K562 (cell line): ENCODE measurements at regions of chr7 and their contacts with region 1.

Region 1: GRCh38 chr7:22697876-22698606 is 29.0 kb upstream of the IL6 start:
- DNase-seq: no peak
- ATAC-seq: no peak
- H3K4me3 ChIP-seq: no peak overlapping the region
- H3K27ac ChIP-seq: peak overlapping the region; percentile 21; the same call in 1 of the 3 replicates
- H3K4me1 ChIP-seq: peaks cover 19 to 68% of the 10 kb centered on the region in 2 experiments
- H3K27me3 ChIP-seq: no peaks in the 10 kb centered on the region
- CTCF ChIP-seq: no peak
- EP300 ChIP-seq: no peak
- POLR2A ChIP-seq: no peak
- RAD21 ChIP-seq: no peak

Region 2: DNA sequence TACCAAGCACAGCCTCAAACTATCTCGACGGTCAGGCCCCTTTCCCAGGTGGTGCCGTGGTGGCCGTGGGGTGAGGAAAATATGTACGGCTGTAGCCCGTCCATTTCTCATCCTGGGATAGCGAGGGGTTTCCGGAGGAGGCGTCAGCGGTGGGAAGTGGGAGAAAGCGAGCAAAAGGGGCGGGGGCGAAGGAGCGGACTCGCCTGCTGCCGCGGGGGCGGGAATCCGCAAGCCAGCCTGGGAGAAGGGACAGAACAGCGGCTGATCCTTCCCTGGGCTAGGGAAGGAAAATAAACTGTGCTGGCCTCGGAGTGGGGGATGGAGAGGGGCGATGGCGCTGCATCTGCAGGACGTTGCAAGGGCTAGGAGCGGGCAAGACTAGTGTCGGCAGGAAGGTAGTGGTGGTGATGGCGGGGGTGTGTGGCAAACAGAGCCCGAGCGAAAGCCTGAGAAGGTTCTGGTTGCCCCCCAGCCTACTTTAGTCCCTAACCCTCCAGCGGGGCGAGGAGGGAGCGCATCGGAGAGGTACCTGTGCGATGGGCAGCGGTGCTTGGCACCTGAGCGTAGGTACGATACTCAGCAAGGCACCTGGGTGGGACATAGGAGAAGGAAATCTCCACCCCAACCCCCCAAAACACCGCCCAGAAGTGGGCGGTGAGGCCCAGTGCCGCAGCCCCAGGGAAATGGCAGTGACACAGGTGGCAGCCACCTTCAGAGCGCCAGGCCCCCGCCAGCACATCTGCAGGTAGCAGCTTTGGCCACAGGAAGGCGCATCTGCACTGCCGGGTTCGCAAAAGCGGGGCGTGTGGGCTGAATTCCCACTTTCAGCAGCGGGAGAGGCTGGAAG is 148.2 kb before region 1 on chr7:
- CTCF ChIA-PET with region 1: no interaction called
- POLR2A ChIA-PET with region 1: no interaction called
- in situ Hi-C with region 1: no loop called
- intact Hi-C with region 1: no loop called
- DNase-seq: no peak
- ATAC-seq: 0 out of 3 replicates have a peak, but pooled peaks have one; percentile 46
- H3K4me3 ChIP-seq: no peak overlapping the region
- H3K27ac ChIP-seq: no peak overlapping the region
- H3K4me1 ChIP-seq: peaks cover 0 to 8% of the 10 kb centered on the region in 2 experiments; a peak in 1 of 5 replicates
- H3K27me3 ChIP-seq: no peaks in the 10 kb centered on the region
- CTCF ChIP-seq: peak; percentile 19 to 35 (median 24); a peak in 3 of 6 replicates
- EP300 ChIP-seq: no peak
- POLR2A ChIP-seq: no peak
- RAD21 ChIP-seq: no peak

Region 3: DNA sequence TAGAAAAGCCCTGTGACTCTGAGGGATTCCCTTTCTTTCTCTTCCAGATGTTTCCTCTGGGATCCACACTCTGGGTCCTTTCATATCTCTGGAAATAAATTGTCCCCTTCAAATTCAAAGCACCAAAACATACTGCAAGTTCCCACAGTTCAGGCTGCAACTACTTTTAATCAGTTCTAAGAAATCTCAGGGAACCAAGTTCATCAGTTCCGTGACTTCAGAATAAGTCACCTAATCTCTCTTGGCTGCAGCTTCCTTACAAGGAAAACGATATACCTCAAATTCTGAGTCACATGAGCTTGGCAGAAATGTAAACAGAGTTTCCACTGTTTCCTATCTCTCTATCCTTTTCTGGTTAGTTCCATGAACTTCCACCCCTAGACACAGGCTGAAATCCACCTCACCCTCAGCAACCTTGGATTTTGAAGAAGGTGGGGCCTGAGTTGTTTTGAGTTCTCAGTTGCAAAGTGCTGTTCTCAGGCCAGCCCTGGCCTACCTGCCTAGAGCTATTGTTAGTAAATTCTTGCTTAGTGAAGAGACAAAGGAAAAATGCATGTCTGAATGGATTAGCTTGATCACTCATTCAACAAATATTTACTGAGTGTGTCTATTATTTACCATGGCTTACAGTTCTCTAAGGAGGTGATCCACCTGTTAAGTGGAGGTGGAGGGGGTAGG is 30.3 kb before region 1 on chr7:
- CTCF ChIA-PET with region 1: no interaction called
- POLR2A ChIA-PET with region 1: interaction called, 5 read pairs
- in situ Hi-C with region 1: no loop called
- intact Hi-C with region 1: loop called (anchors 5 kb)
- DNase-seq: peak in 2 of 4 experiments; percentile 54 to 79
- ATAC-seq: peak; percentile 58
- H3K4me3 ChIP-seq: no peak overlapping the region
- H3K27ac ChIP-seq: peak overlapping the region; percentile 55
- H3K4me1 ChIP-seq: peaks cover 20 to 79% of the 10 kb centered on the region in 2 experiments
- H3K27me3 ChIP-seq: no peaks in the 10 kb centered on the region
- CTCF ChIP-seq: no peak
- EP300 ChIP-seq: peak; percentile 93
- POLR2A ChIP-seq: no peak
- RAD21 ChIP-seq: peak; percentile 4 to 33; a peak in 1 of 4 replicates

Region 4: DNA sequence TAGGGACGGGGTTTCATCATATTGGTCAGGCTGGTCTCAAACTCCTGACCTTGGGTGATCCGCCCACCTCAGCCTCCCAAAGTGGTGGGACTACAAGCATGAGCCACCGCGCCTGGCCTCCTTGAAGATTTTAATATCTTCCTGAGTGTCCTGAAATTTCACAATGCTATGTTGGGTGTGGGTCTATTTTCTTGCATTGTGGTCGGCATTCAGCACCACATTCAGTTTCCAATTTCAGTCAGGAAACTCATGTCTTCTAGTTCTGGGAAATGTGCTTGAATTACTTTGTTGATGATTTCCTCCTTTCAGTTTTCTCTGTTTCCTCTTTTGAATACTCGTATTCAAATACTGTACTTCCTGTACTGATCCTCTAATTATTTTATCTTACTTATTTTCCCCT is 20.4 kb before region 1 on chr7:
- CTCF ChIA-PET with region 1: interaction called, 3 read pairs
- POLR2A ChIA-PET with region 1: interaction called, 22 read pairs
- in situ Hi-C with region 1: no loop called
- intact Hi-C with region 1: loop called (anchors 1 kb)
- DNase-seq: no peak
- ATAC-seq: no peak
- H3K4me3 ChIP-seq: no peak overlapping the region
- H3K27ac ChIP-seq: peak overlapping the region; percentile 48
- H3K4me1 ChIP-seq: peaks cover 12 to 84% of the 10 kb centered on the region in 2 experiments
- H3K27me3 ChIP-seq: no peaks in the 10 kb centered on the region
- CTCF ChIP-seq: no peak
- EP300 ChIP-seq: no peak
- POLR2A ChIP-seq: no peak
- RAD21 ChIP-seq: no peak

Region 5: DNA sequence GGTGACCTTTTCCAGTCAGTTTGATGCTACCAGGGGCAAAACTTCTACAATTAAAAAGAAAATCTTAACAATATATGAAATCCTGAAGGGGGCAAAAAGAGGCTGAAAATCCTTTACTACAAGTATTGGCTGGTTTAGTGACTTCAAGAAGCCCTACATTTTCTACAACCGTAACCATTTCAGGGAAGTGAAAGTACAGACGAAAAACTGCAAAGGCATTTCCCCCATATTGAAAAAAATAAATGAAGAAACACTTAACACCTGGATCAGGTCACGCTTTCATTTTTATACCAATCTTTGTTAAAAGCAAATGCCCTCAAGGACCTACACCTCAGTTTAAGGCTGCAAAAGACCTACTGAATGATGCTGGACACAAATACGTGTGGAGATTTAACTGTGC is 67.6 kb after region 1 on chr7:
- CTCF ChIA-PET with region 1: no interaction called
- POLR2A ChIA-PET with region 1: no interaction called
- in situ Hi-C with region 1: no loop called
- intact Hi-C with region 1: no loop called
- DNase-seq: no peak
- ATAC-seq: no peak
- H3K4me3 ChIP-seq: no peak overlapping the region
- H3K27ac ChIP-seq: no peak overlapping the region
- H3K4me1 ChIP-seq: no peaks in the 10 kb centered on the region
- H3K27me3 ChIP-seq: no peaks in the 10 kb centered on the region
- CTCF ChIP-seq: no peak
- EP300 ChIP-seq: no peak
- POLR2A ChIP-seq: no peak
- RAD21 ChIP-seq: no peak

Region 6: DNA sequence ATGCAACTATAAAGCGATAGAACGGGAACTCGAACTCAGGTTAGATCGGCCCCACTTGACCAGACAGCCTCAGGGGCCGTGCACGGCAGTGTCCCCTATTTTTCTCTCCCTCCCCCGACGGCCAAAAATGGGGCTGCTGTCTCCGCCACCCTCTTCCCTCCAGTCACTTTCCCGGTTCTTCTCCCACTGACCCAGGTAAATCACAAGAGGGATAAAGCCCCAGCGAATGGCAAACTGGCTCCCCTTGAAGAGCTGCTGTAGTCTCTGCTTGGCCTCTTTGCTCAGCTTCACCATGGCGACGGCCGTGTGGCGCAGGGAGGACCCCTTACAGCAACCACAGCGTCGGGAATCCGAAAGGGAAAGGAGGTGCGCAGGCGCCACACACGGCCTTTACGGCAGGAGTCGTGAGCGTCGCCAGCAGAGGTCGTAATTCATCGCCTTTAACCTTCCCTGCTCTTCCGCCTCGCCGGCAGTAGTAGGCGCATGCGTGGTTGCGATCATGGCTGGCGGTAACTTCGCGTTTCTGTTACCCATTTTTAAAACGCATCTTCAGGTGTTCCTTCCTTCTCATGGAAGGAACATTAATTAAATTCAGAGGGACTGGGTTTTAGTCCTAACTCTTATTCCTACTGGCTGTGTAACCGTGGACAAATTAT is 124.6 kb after region 1 on chr7 and contains the start of gene TOMM7:
- CTCF ChIA-PET with region 1: no interaction called
- POLR2A ChIA-PET with region 1: no interaction called
- in situ Hi-C with region 1: no loop called
- intact Hi-C with region 1: no loop called
- DNase-seq: peak; percentile 93 to 98 (median 94)
- ATAC-seq: peak; percentile 87
- H3K4me3 ChIP-seq: peak within 1 kb of the TSS; percentile 56
- H3K27ac ChIP-seq: peak within 1 kb of the TSS; percentile 84
- H3K4me1 ChIP-seq: peaks cover 17 to 27% of the 10 kb centered on the region in 2 experiments; a peak in 4 of 5 replicates
- H3K27me3 ChIP-seq: no peaks in the 10 kb centered on the region
- CTCF ChIP-seq: peak; percentile 21 to 32 (median 32); a peak in 3 of 6 replicates
- EP300 ChIP-seq: no peak
- POLR2A ChIP-seq: peak; percentile 89
- RAD21 ChIP-seq: no peak
- polyA plus RNA-seq, gene TOMM7: 787 to 797 TPM